ENCODE measurements at regions of chrX and their contacts with region 1.

Region 1: GRCh38 chrX:131710431-131711045 is 166.7 kb downstream of the OR13H1 start:
- DNase-seq: no peak
- ATAC-seq: no peak
- H3K4me3 ChIP-seq: peak overlapping the region in 1 of 10 donors; percentile 27
- H3K27ac ChIP-seq: no peak overlapping the region
- H3K4me1 ChIP-seq: peaks cover 0 to 4% (median 0%) of the 10 kb centered on the region in 9 donors
- H3K27me3 ChIP-seq: no peaks in the 10 kb centered on the region
- CTCF ChIP-seq: no peak

Region 2: DNA sequence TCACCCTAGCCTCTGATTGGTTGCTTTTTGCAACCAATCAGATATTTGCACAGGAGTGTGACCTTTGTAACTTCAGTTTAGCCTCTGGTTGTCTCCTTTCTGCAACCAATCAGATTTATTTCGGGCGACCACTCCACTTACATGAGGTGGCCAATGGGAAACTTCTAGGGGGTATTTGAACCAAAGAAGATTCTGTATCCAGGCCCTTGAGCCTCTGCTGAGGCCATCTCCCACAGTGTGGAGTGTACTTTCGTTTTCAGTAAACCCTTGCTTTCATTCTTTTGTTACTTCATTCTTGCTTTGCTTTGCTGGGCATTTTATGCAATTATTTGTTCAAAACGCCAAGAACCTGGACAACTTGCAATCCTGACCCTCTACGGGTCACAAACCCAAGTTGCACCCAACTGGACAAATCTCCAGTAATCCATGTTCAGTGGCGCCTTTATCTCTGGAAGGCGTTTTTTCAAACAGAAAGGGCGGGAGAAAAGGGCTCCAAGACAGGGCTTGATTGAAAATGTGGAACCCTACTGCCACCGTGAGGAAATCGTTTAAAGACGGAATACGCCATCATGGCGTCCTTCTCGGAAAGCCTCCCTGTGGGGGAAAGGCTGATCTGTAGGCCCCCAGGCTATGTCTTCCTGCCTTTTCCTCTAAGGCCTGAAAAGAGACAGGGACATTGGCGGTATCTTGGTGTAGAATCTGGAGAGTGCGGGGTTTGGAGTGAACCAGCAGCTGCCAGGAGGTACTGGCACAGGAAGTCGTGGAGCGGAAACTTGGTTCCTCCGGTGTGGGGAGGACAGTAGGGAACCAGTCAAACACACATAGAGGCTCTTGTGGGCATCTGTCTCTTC is 18.0 kb after region 1 on chrX:
- intact Hi-C with region 1: loop called in 1 of 10 experiments (anchors 2 kb)
- DNase-seq: no peak
- ATAC-seq: peak in 3 of 8 donors; percentile 82 to 94 (median 89)
- H3K4me3 ChIP-seq: peak overlapping the region in 4 of 10 donors; percentile 25 to 59 (median 38)
- H3K27ac ChIP-seq: peak overlapping the region in 3 of 10 donors; percentile 80 to 96 (median 84)
- H3K4me1 ChIP-seq: peaks cover 0 to 5% (median 0%) of the 10 kb centered on the region in 9 donors
- H3K27me3 ChIP-seq: peaks cover 0 to 2% (median 0%) of the 10 kb centered on the region in 7 donors
- CTCF ChIP-seq: peak in 2 of 9 donors; percentile 49 to 50

Measured in heart right ventricle (tissue), 16 donors.